OCI-LY7 (cell line): ENCODE measurements at regions of chr10 and their contacts with region 1.

Region 1: GRCh38 chr10:11533328-11533781 is 78.1 kb downstream of the USP6NL start:
- DNase-seq: peak; percentile 56
- H3K4me3 ChIP-seq: peak overlapping the region; percentile 62
- H3K27ac ChIP-seq: peak overlapping the region; percentile 95
- H3K4me1 ChIP-seq: peaks cover 100% of the 10 kb centered on the region
- CTCF ChIP-seq: peak; percentile 66

Region 2: GRCh38 chr10:11546581-11546980 is 13.2 kb after region 1 on chr10:
- CTCF ChIA-PET with region 1: no interaction called
- POLR2A ChIA-PET with region 1: interaction called, 21 read pairs
- intact Hi-C with region 1: no loop called
- DNase-seq: no peak
- H3K4me3 ChIP-seq: no peak overlapping the region
- H3K27ac ChIP-seq: no peak overlapping the region
- H3K4me1 ChIP-seq: peaks cover 44% of the 10 kb centered on the region
- CTCF ChIP-seq: no peak

Region 3: DNA sequence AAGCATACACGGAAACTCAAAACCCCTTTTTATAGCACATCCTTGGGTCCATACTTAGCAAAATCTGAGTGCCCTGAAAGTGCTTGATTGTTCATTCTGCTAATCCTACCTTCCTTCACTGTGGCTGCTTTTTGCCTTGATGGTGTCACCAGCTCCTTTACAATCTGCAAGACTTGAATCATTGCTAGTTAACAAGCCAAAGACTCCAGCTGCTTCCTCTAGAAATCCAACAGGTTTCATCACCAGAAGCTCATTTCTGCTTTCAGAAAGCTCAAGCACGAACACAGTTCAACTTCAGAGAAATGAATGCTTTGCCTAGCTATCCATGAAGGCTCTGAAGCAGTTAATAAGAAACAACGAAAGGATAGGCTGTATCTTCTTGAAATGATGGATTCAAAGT is 40.1 kb after region 1 on chr10:
- CTCF ChIA-PET with region 1: no interaction called
- POLR2A ChIA-PET with region 1: interaction called, 10 read pairs
- intact Hi-C with region 1: loop called (anchors 5 kb)
- DNase-seq: peak; percentile 67
- H3K4me3 ChIP-seq: peak overlapping the region; percentile 21
- H3K27ac ChIP-seq: peak overlapping the region; percentile 55
- H3K4me1 ChIP-seq: peaks cover 51% of the 10 kb centered on the region
- CTCF ChIP-seq: no peak

Region 4: GRCh38 chr10:11631890-11632587 is 98.7 kb after region 1 on chr10:
- CTCF ChIA-PET with region 1: no interaction called
- POLR2A ChIA-PET with region 1: interaction called, 13 read pairs
- intact Hi-C with region 1: no loop called
- DNase-seq: peak; percentile 81
- H3K4me3 ChIP-seq: peak overlapping the region; percentile 49
- H3K27ac ChIP-seq: peak overlapping the region; percentile 75
- H3K4me1 ChIP-seq: peaks cover 43% of the 10 kb centered on the region
- CTCF ChIP-seq: no peak; the same call in 1 of the 2 replicates

Region 5: DNA sequence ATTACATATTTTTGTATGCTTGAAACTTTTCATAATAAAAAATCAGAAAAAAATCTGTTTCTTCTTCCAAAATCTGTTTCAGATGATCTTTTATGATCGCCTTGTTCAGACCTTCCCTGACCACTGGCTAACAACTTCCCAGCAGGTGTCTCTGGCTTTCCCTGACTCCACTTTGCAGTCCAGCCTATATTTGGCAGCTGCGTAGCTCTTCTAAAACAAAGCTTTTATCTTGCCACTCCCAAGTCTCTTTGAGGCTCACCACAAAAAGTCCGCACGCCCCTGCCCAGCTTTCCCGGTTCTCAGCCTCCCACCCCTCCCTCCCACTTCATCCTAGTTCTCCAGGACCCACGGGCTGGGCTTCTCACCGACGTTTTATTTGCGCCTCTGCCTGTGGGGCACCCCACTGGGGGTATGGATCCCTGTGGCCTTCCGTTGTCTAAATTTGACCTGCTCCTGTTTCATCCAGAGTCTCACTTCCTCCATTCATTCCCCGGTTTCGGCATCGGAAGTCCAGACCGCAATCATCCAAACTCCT is 137.0 kb after region 1 on chr10:
- CTCF ChIA-PET with region 1: interaction called, 3 read pairs
- POLR2A ChIA-PET with region 1: interaction called, 14 read pairs
- intact Hi-C with region 1: loop called (anchors 1 kb)
- DNase-seq: no peak
- H3K4me3 ChIP-seq: no peak overlapping the region
- H3K27ac ChIP-seq: no peak overlapping the region
- H3K4me1 ChIP-seq: peaks cover 83% of the 10 kb centered on the region
- CTCF ChIP-seq: no peak

Region 6: GRCh38 chr10:11684717-11685645 is 151.6 kb after region 1 on chr10:
- CTCF ChIA-PET with region 1: no interaction called
- POLR2A ChIA-PET with region 1: interaction called, 14 read pairs
- intact Hi-C with region 1: loop called (anchors 2 kb)
- DNase-seq: peak; percentile 96
- H3K4me3 ChIP-seq: peak overlapping the region; percentile 66
- H3K27ac ChIP-seq: peak overlapping the region; percentile 100
- H3K4me1 ChIP-seq: peaks cover 89% of the 10 kb centered on the region
- CTCF ChIP-seq: no peak

Region 7: DNA sequence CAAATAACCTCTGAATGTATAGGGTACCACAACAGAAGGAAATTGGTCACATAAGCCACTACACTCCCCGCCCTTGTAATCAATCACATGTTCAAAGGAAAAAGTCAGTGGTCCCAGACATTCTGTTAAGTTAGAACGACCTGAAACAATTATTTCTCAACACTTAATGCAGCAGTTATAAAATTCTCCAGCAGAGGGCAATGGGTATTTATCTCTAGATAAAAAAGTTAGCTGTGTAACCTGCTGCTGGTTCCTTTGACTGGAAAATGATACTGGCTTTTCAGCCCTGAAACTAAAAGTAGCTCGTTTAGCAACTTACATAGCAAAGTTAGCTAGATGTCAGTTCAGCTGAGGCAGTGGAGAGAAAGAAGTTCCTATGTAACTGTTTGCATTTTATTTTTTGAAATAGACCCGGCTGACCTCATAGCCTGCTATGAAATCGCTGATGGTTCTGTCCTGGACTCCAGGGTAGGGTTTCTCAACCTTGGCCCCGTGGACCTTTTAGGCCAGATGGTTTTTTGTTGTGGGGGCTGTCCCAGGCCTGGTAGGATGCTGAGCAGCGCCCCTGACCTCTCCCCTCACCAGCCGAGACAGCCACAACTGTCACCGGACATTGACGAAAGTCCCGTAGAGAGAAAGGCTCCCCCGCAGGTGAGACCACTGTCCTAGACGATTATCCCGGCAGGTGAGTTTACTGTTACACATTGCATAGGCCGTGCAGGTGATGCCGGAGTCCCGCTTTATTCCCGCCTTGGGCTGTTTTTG is 249.6 kb after region 1 on chr10:
- CTCF ChIA-PET with region 1: no interaction called
- POLR2A ChIA-PET with region 1: no interaction called
- intact Hi-C with region 1: no loop called
- DNase-seq: peak; percentile 75
- H3K4me3 ChIP-seq: no peak overlapping the region
- H3K27ac ChIP-seq: no peak overlapping the region
- H3K4me1 ChIP-seq: no peaks in the 10 kb centered on the region
- CTCF ChIP-seq: peak; percentile 91